ENCODE measurements at regions of chr2 and their contacts with region 1.

Region 1: GRCh38 chr2:96773922-96774321 is 13.2 kb downstream of the CNNM4 start:
- DNase-seq: no peak
- H3K4me3 ChIP-seq: peak overlapping the region; percentile 2 to 59 (median 43)
- H3K27ac ChIP-seq: peak overlapping the region; percentile 32 to 52
- H3K4me1 ChIP-seq: peaks cover 0 to 19% of the 10 kb centered on the region in 2 donors
- H3K27me3 ChIP-seq: no peaks in the 10 kb centered on the region
- CTCF ChIP-seq: no peak
- POLR2A ChIP-seq: no peak

Region 2: GRCh38 chr2:95126791-95127190 is 1647.1 kb before region 1 on chr2:
- intact Hi-C with region 1: no loop called
- DNase-seq: no peak
- H3K4me3 ChIP-seq: no peak overlapping the region
- H3K27ac ChIP-seq: no peak overlapping the region
- H3K4me1 ChIP-seq: no peaks in the 10 kb centered on the region
- H3K27me3 ChIP-seq: no peaks in the 10 kb centered on the region
- CTCF ChIP-seq: no peak
- POLR2A ChIP-seq: no peak

Region 3: DNA sequence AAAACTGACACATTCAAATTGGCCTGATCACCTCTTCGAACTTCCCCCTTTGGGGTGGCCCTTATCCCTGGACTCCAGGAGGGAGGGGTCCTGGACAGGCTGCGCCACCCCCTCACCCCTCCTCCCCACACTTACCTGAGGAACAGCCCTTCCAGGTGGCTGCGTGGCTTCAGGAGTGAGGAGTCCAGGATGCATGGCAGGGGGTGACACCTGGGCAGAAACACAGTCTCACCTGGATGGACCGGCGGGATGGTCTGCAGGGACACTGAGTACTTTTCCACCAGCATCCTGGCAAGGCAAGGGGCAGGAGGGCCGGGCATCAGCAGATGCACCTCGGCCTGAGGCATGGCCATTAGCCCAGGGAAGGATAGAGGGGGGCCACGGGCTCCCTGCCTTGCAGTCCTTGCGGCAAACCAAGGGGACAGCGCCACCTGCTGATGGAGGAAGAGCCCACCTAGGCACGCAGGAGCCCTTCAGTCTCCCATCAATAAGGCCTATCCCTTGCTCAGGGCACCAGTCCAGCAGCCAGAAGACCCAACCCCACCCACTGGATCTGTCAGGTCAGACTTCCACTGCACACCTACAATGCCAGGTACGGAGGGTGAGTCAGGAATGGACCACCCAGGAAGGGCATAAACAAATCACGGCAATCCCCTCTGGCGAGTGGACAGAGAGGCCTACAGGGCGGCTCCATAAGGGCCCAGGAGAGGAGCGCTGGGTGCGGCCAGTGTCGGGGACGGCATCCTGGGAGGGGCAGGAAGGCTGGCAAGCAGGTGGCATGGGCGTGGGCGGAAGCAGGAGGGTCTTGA is 186.4 kb after region 1 on chr2:
- intact Hi-C with region 1: loop called (anchors 5 kb)
- DNase-seq: peak; percentile 70 to 84
- H3K4me3 ChIP-seq: no peak overlapping the region
- H3K27ac ChIP-seq: peak overlapping the region in 1 of 2 donors; percentile 7
- H3K4me1 ChIP-seq: no peaks in the 10 kb centered on the region
- H3K27me3 ChIP-seq: no peaks in the 10 kb centered on the region
- CTCF ChIP-seq: peak; percentile 81 to 96 (median 88)
- POLR2A ChIP-seq: no peak